ENCODE measurements at regions of chr5 and their contacts with region 1.

Region 1: DNA sequence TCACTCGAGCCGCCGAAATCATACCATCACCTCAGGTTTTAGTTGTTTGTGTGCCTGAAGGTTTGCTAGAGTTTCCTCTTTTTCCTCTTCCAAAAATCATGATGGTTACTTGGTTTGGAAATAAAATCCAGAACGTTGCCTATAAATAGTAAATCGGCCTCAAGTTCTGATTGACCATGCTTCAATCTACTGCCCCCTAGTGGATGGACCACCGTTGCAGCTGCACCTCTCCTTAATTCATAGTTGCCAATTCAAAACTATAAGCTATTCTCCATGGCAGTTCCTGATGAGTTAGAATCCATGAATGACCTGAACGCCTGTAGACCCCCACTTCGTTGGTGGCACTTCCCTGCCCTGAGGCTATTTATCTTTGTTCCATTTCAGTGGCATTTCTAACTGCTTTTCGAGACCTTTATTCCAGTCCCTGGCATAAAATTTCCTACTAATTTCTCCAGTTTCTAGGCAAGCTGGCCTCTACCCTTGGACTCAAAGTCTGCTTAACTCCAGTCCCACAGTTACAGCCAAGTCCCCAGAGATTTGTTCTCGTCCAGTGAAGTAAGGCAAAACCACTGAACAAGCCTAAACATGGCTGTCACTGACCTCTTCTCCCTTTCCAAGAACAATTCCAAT is 422.6 kb downstream of the EFNA5 start:
- DNase-seq: peak; percentile 13
- ATAC-seq: peak; percentile 80
- H3K4me3 ChIP-seq: no peak overlapping the region
- H3K27ac ChIP-seq: no peak overlapping the region
- H3K4me1 ChIP-seq: no peaks in the 10 kb centered on the region
- H3K27me3 ChIP-seq: peaks cover 0 to 4% of the 10 kb centered on the region in 2 experiments; a peak in 1 of 4 replicates
- CTCF ChIP-seq: peak; percentile 67 to 92 (median 79)
- EP300 ChIP-seq: no peak
- POLR2A ChIP-seq: no peak
- RAD21 ChIP-seq: peak; percentile 62

Region 2: DNA sequence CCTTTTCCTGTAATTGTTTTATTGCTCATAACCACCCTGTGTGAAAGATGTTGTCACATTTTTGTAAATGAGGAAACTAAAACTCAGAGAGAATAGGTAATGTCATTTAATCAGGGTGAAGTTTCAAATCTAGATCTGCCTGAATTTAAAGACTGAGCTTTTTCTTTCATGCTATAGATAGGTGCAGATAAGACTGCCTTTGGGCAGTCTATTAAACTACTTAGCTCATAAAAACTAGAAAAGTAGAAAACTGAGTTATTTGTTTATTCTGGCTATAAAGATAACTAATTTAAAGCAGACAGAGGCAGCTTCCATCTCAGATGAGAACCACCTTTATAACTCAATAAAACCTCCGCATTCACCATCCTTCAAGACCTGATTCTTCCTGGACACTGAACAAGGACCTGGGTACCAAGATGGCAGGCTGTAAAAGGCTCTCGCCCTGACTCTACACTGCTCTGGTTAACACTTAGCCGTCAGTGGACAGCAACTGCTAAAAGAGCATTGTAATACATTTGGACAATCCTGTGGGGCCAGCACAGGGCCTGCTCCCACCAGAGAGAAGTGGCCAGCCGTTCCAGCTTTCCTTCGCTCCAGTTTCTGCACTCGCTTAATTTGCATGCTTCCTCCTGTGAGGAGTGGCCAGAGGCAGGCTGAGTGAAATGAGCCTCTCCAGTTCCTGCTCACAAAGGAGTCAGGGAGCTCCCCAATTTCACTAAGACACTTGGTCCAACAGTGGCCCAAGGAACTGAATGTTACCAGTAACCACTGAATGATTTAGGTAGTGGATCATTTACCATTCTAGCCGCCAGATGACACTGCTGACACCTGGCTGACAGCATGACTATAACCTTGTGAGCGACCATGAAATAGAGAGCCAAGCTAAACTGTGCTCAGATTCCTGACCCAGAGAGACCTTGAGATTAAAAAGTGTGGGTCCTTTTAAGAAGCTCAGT is 143.9 kb before region 1 on chr5:
- CTCF ChIA-PET with region 1: interaction called, 26 read pairs
- POLR2A ChIA-PET with region 1: no interaction called
- RAD21 ChIA-PET with region 1: interaction called, 29 read pairs
- SMC1A ChIA-PET with region 1: interaction called, 11 read pairs
- in situ Hi-C with region 1: no loop called
- intact Hi-C with region 1: loop called (anchors 2 kb)
- DNase-seq: peak; percentile 28
- ATAC-seq: peak; percentile 96
- H3K4me3 ChIP-seq: no peak overlapping the region
- H3K27ac ChIP-seq: no peak overlapping the region
- H3K4me1 ChIP-seq: no peaks in the 10 kb centered on the region
- H3K27me3 ChIP-seq: no peaks in the 10 kb centered on the region
- CTCF ChIP-seq: peak; percentile 18 to 81 (median 52); a peak in 4 of 6 replicates
- EP300 ChIP-seq: no peak
- POLR2A ChIP-seq: no peak
- RAD21 ChIP-seq: peak; percentile 61

Region 3: DNA sequence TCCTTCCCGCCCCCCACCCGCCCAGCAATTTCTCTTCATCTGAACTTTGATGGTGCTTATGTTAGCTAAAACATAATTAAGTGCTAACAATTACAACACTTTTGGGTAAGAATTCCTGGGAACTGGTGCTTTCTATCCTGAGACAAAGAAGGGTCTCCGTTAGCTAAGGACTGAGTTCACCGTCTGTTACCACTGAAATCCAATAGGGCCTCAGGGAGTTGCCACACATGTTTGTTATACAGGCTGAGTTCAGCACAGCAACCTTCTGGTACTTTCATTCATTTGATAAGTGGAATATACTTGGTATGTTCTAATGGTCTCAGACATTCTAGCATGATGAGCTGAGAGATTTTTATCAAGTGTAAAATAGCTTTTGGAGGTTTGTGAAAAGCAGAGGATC is 15.4 kb before region 1 on chr5:
- CTCF ChIA-PET with region 1: interaction called, 53 read pairs
- POLR2A ChIA-PET with region 1: no interaction called
- RAD21 ChIA-PET with region 1: interaction called, 5 read pairs
- SMC1A ChIA-PET with region 1: interaction called, 9 read pairs
- in situ Hi-C with region 1: no loop called
- intact Hi-C with region 1: no loop called
- DNase-seq: no peak
- ATAC-seq: no peak
- H3K4me3 ChIP-seq: no peak overlapping the region
- H3K27ac ChIP-seq: no peak overlapping the region
- H3K4me1 ChIP-seq: no peaks in the 10 kb centered on the region
- H3K27me3 ChIP-seq: no peaks in the 10 kb centered on the region
- CTCF ChIP-seq: no peak
- EP300 ChIP-seq: no peak
- POLR2A ChIP-seq: no peak
- RAD21 ChIP-seq: no peak

Region 4: DNA sequence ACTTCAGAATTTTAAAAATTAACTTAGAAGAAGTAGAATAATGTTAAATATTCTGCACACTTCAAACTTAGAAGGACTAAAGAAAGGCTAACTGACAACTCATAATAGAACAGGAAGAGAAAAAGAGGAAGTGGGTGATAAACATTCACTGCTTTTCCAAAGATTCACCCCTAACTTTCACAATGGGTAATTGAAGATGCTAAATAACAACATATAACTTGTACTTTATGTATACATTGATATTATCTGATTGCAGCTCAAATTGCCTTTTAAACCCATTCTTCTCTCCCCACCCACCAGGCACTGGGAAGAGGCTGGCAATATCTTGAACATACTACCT is 46.0 kb after region 1 on chr5:
- CTCF ChIA-PET with region 1: interaction called, 26 read pairs
- POLR2A ChIA-PET with region 1: interaction called, 3 read pairs
- RAD21 ChIA-PET with region 1: interaction called, 3 read pairs
- SMC1A ChIA-PET with region 1: interaction called, 5 read pairs
- in situ Hi-C with region 1: no loop called
- intact Hi-C with region 1: no loop called
- DNase-seq: peak; percentile 66
- ATAC-seq: peak; percentile 69
- H3K4me3 ChIP-seq: no peak overlapping the region
- H3K27ac ChIP-seq: no peak overlapping the region
- H3K4me1 ChIP-seq: peaks cover 20% of the 10 kb centered on the region
- H3K27me3 ChIP-seq: no peaks in the 10 kb centered on the region
- CTCF ChIP-seq: no peak
- EP300 ChIP-seq: peak; percentile 66 to 96; a peak in 3 of 4 replicates
- POLR2A ChIP-seq: no peak
- RAD21 ChIP-seq: no peak

Region 5: DNA sequence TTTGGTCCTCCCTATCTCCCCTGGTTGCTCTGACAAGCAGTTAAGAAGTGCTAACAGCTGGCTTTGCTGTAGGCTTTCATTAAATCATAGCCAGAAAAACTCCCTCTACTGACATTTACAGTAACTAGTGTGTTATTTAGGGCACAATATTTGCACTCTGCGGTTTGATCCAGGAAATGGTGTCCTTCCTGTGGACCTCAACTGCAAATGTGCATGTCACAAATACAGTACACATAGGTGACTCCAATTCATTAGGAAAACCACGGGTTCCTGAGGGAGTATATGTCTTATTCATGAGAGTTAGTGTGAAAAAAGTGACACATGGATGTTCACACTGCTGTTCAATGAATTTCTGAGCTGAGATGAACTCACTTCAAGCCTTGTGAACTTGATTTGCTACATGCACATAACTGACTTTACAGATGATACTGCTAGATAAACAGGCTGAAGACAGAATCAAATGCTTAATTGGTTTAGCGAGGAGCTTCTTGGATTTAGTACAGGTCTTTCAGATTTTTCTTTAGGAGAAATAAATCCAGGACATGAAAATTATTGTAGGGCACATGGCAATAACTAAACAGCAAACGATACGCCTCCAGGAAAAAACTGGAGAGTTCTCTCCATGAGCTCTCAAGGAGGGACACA is 141.1 kb after region 1 on chr5:
- CTCF ChIA-PET with region 1: interaction called, 10 read pairs
- POLR2A ChIA-PET with region 1: interaction called, 6 read pairs
- RAD21 ChIA-PET with region 1: no interaction called
- SMC1A ChIA-PET with region 1: interaction called, 3 read pairs
- in situ Hi-C with region 1: no loop called
- intact Hi-C with region 1: loop called (anchors 5 kb)
- DNase-seq: peak; percentile 92
- ATAC-seq: peak; percentile 82
- H3K4me3 ChIP-seq: peak overlapping the region; percentile 43
- H3K27ac ChIP-seq: peak overlapping the region; percentile 69
- H3K4me1 ChIP-seq: peaks cover 22% of the 10 kb centered on the region
- H3K27me3 ChIP-seq: no peaks in the 10 kb centered on the region
- CTCF ChIP-seq: peak in 1 of 3 experiments; percentile 27; a peak in 1 of 6 replicates
- EP300 ChIP-seq: peak; percentile 89 to 90; a peak in 2 of 4 replicates
- POLR2A ChIP-seq: no peak
- RAD21 ChIP-seq: peak; percentile 50

Measured in GM12878 (cell line).